Mammary epithelial cell (primary cell): ENCODE measurements at regions of chr7 and their contacts with region 1.

Region 1: GRCh38 chr7:99997545-99998137 is 17.8 kb upstream of the ZKSCAN1 start:
- DNase-seq: no peak
- H3K4me3 ChIP-seq: peak overlapping the region in 1 of 3 experiments; percentile 21
- H3K27ac ChIP-seq: no peak overlapping the region
- H3K4me1 ChIP-seq: peaks cover 5% of the 10 kb centered on the region
- H3K27me3 ChIP-seq: no peaks in the 10 kb centered on the region
- CTCF ChIP-seq: no peak

Region 2: DNA sequence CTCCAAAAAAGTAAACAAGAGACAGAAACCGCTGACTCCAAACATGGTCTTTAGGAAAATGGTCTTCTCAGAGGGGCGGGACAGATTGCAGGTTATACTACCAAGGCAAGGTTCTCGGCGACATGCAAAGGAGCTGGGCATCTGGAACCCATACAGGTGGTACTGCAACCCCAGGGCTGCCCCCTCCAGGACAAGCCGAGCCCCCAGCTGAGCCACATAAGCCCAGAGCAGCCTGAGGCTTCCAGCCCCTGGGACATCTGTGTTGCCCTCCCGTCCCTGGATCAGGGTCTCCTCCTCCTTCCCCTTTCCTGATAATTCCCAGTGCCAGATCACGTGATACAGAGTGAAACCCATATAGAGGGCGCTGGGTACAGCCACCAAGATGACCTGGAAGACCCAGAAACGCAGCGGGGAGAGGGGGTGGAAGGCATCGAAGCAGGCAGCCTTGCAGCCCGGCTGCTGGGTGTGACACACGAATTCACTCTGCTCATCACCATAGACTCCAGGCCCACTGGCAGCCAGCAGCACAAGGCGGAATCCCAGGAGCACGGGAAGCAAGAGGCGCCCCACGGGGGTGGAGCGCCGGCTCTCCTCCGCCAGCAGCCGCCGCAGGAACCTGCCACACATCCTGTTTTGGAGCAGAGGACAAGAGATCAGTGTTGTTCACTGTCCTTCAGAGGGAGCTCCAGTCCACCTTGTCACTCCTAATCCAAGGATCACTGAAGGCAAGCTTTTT is 68.5 kb before region 1 on chr7 and contains the start of gene GJC3:
- CTCF ChIA-PET with region 1: no interaction called
- dilution Hi-C with region 1: loop called (anchors 10 kb)
- in situ Hi-C with region 1: no loop called
- intact Hi-C with region 1: no loop called
- DNase-seq: peak; percentile 59
- H3K4me3 ChIP-seq: peak within 1 kb of the TSS in 2 of 3 experiments; percentile 17 to 35
- H3K27ac ChIP-seq: no peak within 1 kb of the TSS
- H3K4me1 ChIP-seq: peaks cover 23% of the 10 kb centered on the region
- H3K27me3 ChIP-seq: no peaks in the 10 kb centered on the region
- CTCF ChIP-seq: peak; percentile 27 to 65
- total RNA-seq, gene GJC3: 0.38 TPM in 1 of 2 donors, not detected in the other

Region 3: GRCh38 chr7:99949638-99950228 is 47.9 kb before region 1 on chr7:
- CTCF ChIA-PET with region 1: no interaction called
- dilution Hi-C with region 1: loop called (anchors 5 kb)
- in situ Hi-C with region 1: no loop called
- intact Hi-C with region 1: no loop called
- DNase-seq: no peak
- H3K4me3 ChIP-seq: no peak overlapping the region
- H3K27ac ChIP-seq: no peak overlapping the region
- H3K4me1 ChIP-seq: no peaks in the 10 kb centered on the region
- H3K27me3 ChIP-seq: no peaks in the 10 kb centered on the region
- CTCF ChIP-seq: peak; percentile 35 to 53

Region 4: GRCh38 chr7:100022665-100023064 is 25.0 kb after region 1 on chr7:
- CTCF ChIA-PET with region 1: interaction called, 11 read pairs
- dilution Hi-C with region 1: no loop called
- in situ Hi-C with region 1: no loop called
- intact Hi-C with region 1: no loop called
- DNase-seq: peak; percentile 55
- H3K4me3 ChIP-seq: no peak overlapping the region
- H3K27ac ChIP-seq: no peak overlapping the region
- H3K4me1 ChIP-seq: peaks cover 20% of the 10 kb centered on the region
- H3K27me3 ChIP-seq: no peaks in the 10 kb centered on the region
- CTCF ChIP-seq: no peak

Region 5: GRCh38 chr7:100049441-100050311 is 52.0 kb after region 1 on chr7 and contains the start of gene ZSCAN21:
- CTCF ChIA-PET with region 1: no interaction called
- dilution Hi-C with region 1: no loop called
- in situ Hi-C with region 1: loop called (anchors 5 to 10 kb)
- intact Hi-C with region 1: loop called (anchors 1 kb)
- DNase-seq: peak; percentile 79
- H3K4me3 ChIP-seq: peak within 1 kb of the TSS; percentile 85 to 97 (median 86)
- H3K27ac ChIP-seq: peak within 1 kb of the TSS; percentile 86
- H3K4me1 ChIP-seq: peaks cover 6% of the 10 kb centered on the region
- H3K27me3 ChIP-seq: no peaks in the 10 kb centered on the region
- CTCF ChIP-seq: peak in 1 of 2 donors; percentile 24
- total RNA-seq, gene ZSCAN21: 10.8 to 15.0 TPM

Region 6: DNA sequence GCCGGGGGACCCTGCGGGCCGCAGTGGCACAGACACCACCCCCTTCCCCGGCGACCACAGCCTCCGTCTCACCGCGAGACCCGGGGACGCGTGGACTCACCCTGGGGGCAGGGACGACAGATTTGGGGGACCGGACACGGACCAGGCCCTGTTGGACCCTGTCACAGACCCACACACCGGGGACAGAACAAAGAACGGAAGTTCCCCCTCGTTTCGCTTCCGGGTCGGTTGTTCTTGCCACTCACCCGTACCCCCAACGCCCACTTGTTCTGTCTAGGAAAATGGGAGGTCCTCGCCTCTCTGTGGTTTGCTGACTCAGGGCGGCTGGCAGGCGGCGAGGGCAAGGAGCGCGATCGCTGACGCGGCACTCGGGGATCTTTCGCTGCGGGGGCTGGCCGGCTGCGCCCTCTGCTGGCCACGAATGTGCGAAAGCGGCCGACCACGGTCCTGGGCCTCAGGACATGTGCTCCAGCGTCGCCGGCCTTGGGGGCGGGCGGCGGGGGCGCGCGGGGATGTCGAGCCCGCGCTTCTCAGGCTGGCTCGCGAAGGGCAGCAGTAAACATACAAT is 84.0 kb after region 1 on chr7 and contains the start of gene ZNF3:
- CTCF ChIA-PET with region 1: interaction called, 3 read pairs
- dilution Hi-C with region 1: loop called (anchors 5 kb)
- in situ Hi-C with region 1: no loop called
- intact Hi-C with region 1: loop called (anchors 1 kb)
- DNase-seq: peak; percentile 99
- H3K4me3 ChIP-seq: peak within 1 kb of the TSS; percentile 61 to 99 (median 77)
- H3K27ac ChIP-seq: peak within 1 kb of the TSS; percentile 69
- H3K4me1 ChIP-seq: peaks cover 8% of the 10 kb centered on the region
- H3K27me3 ChIP-seq: no peaks in the 10 kb centered on the region
- CTCF ChIP-seq: peak; percentile 56 to 91
- total RNA-seq, gene ZNF3: 22.6 to 28.7 TPM

Region 7: GRCh38 chr7:100126931-100127865 is 129.6 kb after region 1 on chr7 and contains the start of gene MBLAC1:
- CTCF ChIA-PET with region 1: no interaction called
- dilution Hi-C with region 1: no loop called
- in situ Hi-C with region 1: loop called in 1 of 2 experiments (anchors 5 kb)
- intact Hi-C with region 1: loop called (anchors 1 kb)
- DNase-seq: peak; percentile 86
- H3K4me3 ChIP-seq: peak within 1 kb of the TSS; percentile 62 to 95 (median 90)
- H3K27ac ChIP-seq: peak within 1 kb of the TSS; percentile 90
- H3K4me1 ChIP-seq: peaks cover 7% of the 10 kb centered on the region
- H3K27me3 ChIP-seq: no peaks in the 10 kb centered on the region
- CTCF ChIP-seq: no peak
- total RNA-seq, gene MBLAC1: 1.2 to 1.5 TPM